ENCODE measurements at regions of chr5 and their contacts with region 1.

Region 1: DNA sequence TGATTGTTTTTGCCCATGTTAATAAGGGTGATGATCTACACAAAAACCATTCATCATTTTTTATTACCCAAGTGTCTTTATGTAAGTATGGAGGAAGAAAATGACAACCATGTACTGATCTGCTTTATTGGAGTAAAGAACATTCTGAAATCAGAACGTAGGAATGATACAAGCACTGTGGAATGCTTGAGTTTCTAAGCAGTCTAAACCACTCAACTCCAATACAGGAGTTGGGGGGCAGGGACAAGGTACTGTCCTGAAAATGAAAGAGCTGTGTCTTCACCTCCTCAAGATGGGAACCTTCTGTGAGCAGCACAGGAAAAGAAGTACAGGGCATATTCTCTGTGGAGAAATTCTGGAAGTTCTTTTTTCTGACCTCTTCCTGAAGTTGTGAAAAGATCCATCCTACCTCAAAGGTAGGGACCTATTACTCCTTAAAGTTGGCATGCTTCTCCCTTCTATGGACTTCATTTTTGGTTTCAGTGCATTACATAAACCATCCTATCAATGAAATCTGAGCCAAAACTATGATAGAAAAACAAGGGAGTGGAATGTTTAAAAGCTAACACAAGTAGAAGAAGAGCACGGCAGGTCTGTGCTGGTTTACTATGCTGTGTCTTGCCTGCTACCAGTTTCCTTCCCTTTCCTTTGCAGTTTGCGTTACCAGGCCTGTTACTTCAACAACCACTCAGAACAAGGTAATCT is 202.6 kb downstream of the SEMA5A start:
- DNase-seq: no peak
- H3K4me3 ChIP-seq: no peak overlapping the region
- CTCF ChIP-seq: no peak

Region 2: DNA sequence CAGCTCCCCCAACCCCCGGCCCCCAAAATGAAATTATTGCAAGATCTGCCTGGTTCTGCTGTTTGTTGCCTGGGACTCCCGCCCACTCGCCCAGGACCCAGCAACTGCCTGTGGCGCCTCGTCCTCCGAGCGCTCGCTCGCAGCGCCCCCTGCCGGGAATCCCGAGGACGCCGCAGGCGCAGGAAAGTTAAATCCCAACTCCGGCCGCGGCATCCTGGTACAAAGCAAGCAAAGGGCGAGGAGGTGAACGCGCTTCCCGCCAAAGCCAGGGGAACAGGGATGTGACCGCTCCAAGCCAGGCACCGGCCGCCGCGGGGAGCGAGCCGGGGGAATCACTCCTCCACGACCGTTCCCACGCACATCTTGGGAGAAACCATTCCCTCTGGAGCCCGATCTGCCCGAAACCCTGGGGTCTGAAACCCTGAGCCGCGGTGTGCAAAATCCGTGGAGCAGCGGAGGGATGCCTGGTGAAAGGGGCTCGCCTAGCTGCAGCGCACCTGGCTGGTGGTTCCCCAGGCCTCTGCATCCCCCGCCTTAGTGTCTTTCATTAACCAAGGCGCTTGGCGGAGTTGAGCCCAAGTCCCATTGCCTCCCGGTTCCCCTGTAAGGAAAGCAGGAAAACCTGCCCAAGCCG is 201.3 kb after region 1 on chr5:
- CTCF ChIA-PET with region 1: interaction called, 19 read pairs
- POLR2A ChIA-PET with region 1: interaction called, 3 read pairs
- DNase-seq: no peak
- H3K4me3 ChIP-seq: peak overlapping the region; percentile 93
- CTCF ChIP-seq: peak; percentile 92